WTC11 (cell line): ENCODE measurements at regions of chr1 and their contacts with region 1.

Region 1: DNA sequence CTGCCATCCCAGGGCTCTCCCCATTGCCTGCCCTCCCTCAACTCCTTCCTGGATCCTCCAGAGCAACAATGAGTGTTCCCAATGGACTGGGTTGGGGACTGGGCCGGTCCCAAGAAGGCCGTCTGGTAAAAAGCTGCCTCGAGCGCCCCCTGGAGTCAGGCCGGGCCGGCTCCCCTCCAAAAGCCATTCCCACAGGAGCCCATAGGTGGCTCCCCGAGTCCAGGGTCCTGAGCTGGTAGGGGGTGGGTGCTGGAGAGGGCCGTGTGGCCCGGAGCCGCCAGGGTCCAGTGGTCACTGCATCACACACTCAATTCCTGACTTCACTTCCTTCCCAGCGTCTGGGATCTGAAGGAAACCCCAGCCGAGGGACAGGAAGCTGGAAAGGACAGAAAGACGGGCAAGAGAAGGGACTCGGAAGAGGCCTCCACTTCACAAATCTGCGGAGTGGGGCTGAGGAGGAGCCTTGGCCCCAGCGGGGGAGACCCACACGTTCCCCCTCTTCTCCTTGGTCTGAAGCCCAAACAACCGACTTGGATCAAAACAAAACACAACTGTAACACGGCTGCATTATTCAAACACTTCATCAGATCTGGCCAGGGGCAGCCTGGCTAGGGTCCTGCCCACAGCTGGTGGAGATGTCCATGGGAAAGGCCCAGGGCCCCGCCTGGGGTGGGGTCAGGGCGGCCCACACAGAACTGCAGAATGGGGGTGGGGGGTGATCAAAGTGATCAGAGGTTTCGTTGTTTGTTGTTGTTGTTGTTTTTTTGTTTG is 10.9 kb upstream of the ALDH4A1 start:
- DNase-seq: peak; percentile 94
- ATAC-seq: peak; percentile 95
- H3K4me3 Mint-ChIP-seq: no peak overlapping the region
- H3K27ac Mint-ChIP-seq: no peak overlapping the region
- H3K4me1 Mint-ChIP-seq: peaks cover 5% of the 10 kb centered on the region
- H3K27me3 Mint-ChIP-seq: no peaks in the 10 kb centered on the region
- CTCF ChIP-seq: peak; percentile 94

Region 2: DNA sequence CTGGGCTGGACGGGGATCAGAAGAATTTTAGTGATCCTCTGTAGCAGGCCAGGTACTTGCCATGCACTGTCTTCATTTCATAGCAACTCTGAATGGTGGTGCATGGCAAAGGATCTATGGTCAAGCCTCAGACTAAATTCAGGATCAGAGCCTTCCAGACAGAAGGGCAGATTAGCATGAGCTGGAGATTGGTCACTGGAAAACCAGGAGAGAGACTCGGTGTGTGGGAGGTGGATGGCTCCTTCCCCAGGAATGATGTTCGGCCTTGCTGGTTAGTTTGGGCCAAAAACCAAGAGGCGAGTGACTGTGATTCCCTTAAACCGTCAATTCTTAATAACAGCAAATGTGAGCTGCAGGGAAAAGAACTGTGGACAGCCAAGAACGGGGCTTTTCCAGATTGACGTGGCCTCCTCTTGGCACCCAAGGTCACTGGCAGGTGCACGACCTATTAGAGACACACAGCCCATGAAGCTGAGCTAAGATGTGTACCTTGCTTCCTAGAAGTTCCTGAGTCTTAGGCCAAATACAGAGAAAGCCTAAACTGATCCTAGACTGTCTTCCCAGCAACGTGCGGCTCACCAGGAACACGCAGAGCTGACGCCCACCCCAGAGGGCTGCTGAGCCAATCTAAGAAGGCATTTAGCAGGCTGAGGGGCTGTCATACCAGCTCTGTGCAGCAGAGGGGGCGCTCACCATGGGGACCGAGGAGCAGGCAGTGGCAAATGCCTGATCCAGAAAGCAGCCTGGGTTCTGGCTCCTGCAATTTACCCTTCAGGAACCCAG is 29.4 kb before region 1 on chr1:
- CTCF ChIA-PET with region 1: interaction called, 41 read pairs
- POLR2A ChIA-PET with region 1: no interaction called
- DNase-seq: peak; percentile 90
- ATAC-seq: peak; percentile 92
- H3K4me3 Mint-ChIP-seq: no peak overlapping the region
- H3K27ac Mint-ChIP-seq: no peak overlapping the region
- H3K4me1 Mint-ChIP-seq: no peaks in the 10 kb centered on the region; the same call in 1 of the 2 replicates
- H3K27me3 Mint-ChIP-seq: no peaks in the 10 kb centered on the region
- CTCF ChIP-seq: peak; percentile 85

Region 3: DNA sequence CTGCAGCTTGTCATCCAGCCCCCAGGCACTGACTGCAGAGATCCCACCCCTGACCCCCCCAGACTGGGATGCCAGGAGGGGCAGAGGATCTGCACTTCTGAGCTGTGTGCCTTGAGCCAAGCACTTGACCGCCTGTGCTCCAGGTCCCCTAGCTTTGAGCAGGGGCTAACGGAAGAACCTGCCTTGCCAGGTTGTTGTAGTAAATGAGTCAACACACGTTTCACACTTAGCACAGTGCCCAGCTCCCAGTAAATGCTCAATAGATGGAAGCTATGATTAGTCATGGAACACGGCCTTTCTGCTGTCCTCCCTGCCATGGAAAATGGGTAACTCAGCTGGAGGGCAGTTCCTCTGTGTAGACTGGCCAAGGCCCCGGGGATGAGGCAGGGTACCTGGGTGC is 19.1 kb after region 1 on chr1:
- CTCF ChIA-PET with region 1: interaction called, 107 read pairs
- POLR2A ChIA-PET with region 1: no interaction called
- DNase-seq: no peak
- ATAC-seq: no peak
- H3K4me3 Mint-ChIP-seq: no peak overlapping the region
- H3K27ac Mint-ChIP-seq: peak overlapping the region; percentile 5; the same call in 1 of the 2 replicates
- H3K4me1 Mint-ChIP-seq: peaks cover 44% of the 10 kb centered on the region
- H3K27me3 Mint-ChIP-seq: no peaks in the 10 kb centered on the region
- CTCF ChIP-seq: no peak

Region 4: DNA sequence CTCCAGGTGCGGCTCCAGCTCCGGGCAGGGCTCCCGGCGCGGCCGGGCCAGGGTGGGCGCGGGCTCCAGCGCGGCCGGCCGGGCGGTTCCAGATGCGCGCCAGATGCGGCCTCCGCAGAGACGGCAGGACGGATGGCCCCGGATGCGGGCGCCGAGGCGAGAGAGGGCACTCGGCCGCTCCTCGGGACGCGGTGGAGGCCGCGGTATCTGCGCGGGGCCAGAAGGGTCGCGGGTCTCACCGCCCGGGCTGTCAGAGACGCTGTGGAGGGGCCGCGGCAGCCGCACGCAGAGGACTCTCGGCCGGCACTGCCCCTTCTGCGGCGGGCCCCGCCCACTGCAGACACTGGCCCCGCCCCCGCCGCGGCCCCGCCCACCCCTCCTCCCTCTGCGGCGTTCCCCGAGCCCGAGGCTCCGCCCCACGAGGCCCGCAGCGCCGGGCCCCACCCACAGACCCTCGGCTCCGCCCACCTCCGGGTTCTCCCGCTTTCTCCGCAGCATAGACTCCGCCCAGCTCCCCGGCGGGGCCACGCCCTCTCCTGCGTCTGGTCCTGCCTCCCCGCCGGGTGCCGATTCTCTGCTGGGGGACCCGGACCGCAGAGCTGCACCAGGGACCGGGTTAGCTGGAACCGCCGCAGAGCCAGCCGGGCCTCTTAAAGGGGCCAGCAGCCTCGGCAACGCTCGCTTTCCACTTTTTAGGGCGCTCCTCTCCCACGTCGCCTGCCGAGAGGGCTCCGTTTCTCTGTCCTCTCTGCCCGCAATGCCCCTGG is 43.3 kb after region 1 on chr1 and contains the start of gene IFFO2:
- CTCF ChIA-PET with region 1: interaction called, 47 read pairs
- POLR2A ChIA-PET with region 1: interaction called, 4 read pairs
- DNase-seq: peak; percentile 99
- ATAC-seq: peak; percentile 91
- H3K4me3 Mint-ChIP-seq: peak within 1 kb of the TSS; percentile 86
- H3K27ac Mint-ChIP-seq: no peak within 1 kb of the TSS
- H3K4me1 Mint-ChIP-seq: peaks cover 18% of the 10 kb centered on the region
- H3K27me3 Mint-ChIP-seq: peaks cover 59% of the 10 kb centered on the region
- CTCF ChIP-seq: no peak
- total RNA-seq, gene IFFO2: 6.5 to 8.1 TPM (median 6.9 TPM) in 3 replicates

Region 5: DNA sequence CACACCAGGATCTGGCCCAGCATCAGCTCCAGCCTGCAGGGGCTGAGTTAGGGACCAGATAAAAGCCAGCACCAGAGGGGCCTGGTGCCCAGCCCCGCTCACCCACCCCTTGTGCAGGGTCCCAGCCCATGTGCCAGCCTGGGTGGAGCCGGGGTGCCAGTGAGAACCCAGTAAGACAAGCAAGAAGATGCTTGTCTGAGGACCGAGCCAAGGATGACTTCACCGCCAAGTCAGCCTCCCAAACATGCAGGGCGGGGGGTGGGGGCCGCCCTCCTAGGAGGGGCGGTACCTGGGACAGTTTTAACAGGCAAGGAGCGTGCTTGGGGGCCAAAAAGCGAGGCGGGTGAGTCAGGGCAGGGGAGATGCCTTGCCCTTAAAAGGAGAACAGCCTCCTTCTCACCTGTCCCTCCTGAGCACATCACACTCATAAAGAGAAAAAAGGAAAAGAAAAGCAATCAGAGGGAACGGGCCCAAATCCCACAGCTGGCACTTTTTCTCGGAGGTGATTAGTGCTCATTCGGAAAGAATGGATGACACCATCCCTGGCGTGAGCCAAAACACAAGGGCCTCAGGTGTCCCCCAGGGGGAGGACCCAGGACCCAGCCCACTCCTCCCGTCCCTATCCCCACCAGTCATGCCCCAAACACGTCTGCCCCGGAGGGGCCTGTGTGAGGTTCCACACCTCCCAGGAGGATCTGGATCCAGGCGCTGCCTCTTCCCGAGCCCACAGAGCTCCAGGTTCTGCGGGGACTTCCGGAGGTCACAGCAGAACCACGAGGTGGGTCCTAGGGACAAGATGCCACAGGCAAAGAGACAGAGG is 120.8 kb after region 1 on chr1:
- CTCF ChIA-PET with region 1: interaction called, 13 read pairs
- POLR2A ChIA-PET with region 1: no interaction called
- DNase-seq: peak; percentile 8
- ATAC-seq: no peak
- H3K4me3 Mint-ChIP-seq: no peak overlapping the region
- H3K27ac Mint-ChIP-seq: no peak overlapping the region
- H3K4me1 Mint-ChIP-seq: no peaks in the 10 kb centered on the region
- H3K27me3 Mint-ChIP-seq: no peaks in the 10 kb centered on the region
- CTCF ChIP-seq: no peak

Region 6: DNA sequence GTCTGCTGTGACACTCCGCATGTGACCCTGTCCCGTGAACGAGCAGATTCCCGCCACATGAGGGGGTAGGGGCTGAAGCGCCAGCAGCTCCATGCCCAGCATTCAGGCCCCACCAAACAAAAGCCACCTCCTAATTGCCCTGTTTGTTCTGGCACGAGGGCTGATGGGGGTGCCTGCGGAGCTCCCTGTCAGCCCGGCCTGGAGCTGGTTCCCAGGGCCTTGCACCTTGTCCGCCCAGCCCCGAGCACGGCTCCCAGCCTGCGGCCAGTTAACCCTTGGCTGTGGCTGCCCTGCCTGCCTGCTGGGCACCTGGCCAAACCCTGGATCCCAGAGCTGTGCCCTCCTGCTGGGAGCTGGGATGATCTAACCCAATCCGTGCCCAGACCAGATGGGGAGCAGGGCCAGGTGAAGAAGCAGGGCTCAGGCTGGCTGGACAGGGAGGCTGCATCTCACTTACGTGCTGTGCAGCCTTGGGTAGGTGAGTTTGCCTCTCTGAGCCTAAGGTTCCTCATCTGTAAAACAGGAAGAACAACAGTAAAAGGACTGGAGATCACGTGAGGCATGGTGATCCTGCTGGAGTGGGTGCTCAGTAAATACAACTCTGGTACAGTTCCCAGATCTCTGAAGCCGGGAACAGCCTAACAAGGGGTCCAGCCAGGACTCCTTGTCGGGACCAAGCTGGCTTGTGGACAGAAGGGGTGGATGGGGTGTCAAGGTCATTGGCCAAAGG is 154.1 kb after region 1 on chr1:
- CTCF ChIA-PET with region 1: interaction called, 74 read pairs
- POLR2A ChIA-PET with region 1: no interaction called
- DNase-seq: no peak
- ATAC-seq: peak; percentile 46
- H3K4me3 Mint-ChIP-seq: no peak overlapping the region
- H3K27ac Mint-ChIP-seq: no peak overlapping the region
- H3K4me1 Mint-ChIP-seq: peaks cover 3% of the 10 kb centered on the region; the same call in 1 of the 2 replicates
- H3K27me3 Mint-ChIP-seq: no peaks in the 10 kb centered on the region; the same call in 1 of the 2 replicates
- CTCF ChIP-seq: no peak